HEK293 (cell line): ENCODE measurements at regions of chr12 and their contacts with region 1.

Region 1: DNA sequence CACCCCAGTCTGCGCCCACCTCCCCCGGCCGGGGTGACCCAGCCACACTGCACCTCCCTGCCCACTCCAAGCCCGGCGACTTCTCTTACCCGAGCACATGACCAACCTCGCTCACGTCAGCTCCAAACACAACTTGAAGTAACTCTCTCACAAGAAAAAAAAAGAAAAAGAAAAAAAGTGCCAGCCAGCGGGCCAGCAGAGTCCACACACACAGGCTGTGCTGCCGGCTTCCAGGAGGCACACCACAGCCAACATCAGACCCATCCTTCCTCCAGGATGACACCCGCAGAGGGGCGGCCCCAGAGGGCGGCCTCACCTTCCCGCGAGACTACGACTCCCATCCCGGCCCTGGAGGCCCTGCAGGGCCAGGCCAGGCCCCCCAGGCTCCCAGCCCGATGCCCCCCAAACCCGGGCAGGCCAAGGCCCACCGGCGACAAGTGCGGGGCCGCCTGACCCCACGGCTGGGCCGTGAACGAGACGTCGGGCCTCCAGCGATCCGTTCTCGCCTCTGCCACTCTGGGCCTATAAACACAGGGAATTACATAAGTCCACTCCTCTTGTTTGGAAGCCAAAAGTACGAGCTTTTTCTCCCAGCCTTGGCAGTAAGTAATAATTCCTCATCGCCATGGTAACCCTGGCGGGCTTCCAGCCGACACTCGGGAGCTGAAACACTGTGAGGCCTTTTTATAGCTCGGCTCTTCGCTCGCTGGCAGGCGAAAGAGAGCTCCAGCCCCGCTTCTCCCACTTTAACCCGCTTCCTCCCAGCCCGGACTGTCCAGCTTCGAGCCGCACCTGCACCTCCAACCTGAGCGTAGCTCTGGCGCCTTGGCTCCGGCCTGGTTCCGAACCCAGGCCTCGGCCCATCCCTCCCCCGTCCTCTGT is 49.1 kb downstream of the NCOR2 start:
- H3K4me3 ChIP-seq: peak overlapping the region; percentile 58
- H3K27ac ChIP-seq: peak overlapping the region; percentile 99
- H3K4me1 ChIP-seq: peaks cover 18% of the 10 kb centered on the region
- CTCF ChIP-seq: 0 out of 2 replicates have a peak, but pooled peaks have one; percentile 7

Region 2: GRCh38 chr12:124567661-124568373 is 49.5 kb after region 1 on chr12:
- CTCF ChIA-PET with region 1: interaction called, 4 read pairs
- POLR2A ChIA-PET with region 1: interaction called, 10 read pairs
- H3K4me3 ChIP-seq: peak overlapping the region; percentile 44
- H3K27ac ChIP-seq: peak overlapping the region; percentile 81
- H3K4me1 ChIP-seq: peaks cover 5% of the 10 kb centered on the region
- CTCF ChIP-seq: peak; percentile 44; the same call in 1 of the 2 replicates

Region 3: GRCh38 chr12:124588751-124589267 is 70.5 kb after region 1 on chr12:
- CTCF ChIA-PET with region 1: no interaction called
- POLR2A ChIA-PET with region 1: no interaction called
- H3K4me3 ChIP-seq: no peak overlapping the region
- H3K27ac ChIP-seq: no peak overlapping the region
- H3K4me1 ChIP-seq: no peaks in the 10 kb centered on the region
- CTCF ChIP-seq: no peak